HepG2 (cell line): ENCODE measurements at regions of chr2 and their contacts with region 1.

Region 1: GRCh38 chr2:182933629-182934028 is 67.2 kb upstream of the FRZB start:
- DNase-seq: no peak
- ATAC-seq: no peak
- H3K4me3 ChIP-seq: no peak overlapping the region
- H3K27ac ChIP-seq: no peak overlapping the region
- H3K4me1 ChIP-seq: no peaks in the 10 kb centered on the region
- H3K27me3 ChIP-seq: no peaks in the 10 kb centered on the region
- CTCF ChIP-seq: no peak
- EP300 ChIP-seq: no peak
- POLR2A ChIP-seq: no peak
- RAD21 ChIP-seq: no peak

Region 2: DNA sequence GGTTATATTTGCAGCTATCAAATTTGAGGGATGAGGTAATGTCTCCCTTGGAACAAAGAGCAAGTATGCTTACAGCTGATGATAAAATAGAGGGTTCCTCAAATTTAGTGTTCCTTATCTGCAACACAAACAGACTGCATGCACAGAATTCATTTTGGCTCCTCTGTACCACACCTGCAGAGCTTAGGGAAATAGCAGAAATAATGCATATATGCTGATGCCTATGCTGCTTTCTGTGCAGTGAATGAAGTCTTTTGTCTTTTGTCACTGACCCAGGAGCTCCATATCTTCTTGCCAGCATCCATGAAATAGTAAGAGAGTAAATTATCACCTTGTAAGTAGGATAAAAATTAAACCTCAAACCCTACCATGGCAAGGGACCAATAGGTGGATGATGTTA is 34.9 kb after region 1 on chr2:
- CTCF ChIA-PET with region 1: no interaction called
- POLR2A ChIA-PET with region 1: no interaction called
- in situ Hi-C with region 1: no loop called
- intact Hi-C with region 1: loop called (anchors 1 kb)
- DNase-seq: no peak
- ATAC-seq: no peak
- H3K4me3 ChIP-seq: no peak overlapping the region
- H3K27ac ChIP-seq: no peak overlapping the region
- H3K4me1 ChIP-seq: peaks cover 9% of the 10 kb centered on the region
- H3K27me3 ChIP-seq: no peaks in the 10 kb centered on the region
- CTCF ChIP-seq: no peak
- EP300 ChIP-seq: no peak
- POLR2A ChIP-seq: no peak
- RAD21 ChIP-seq: no peak